ENCODE measurements at regions of chr10 and their contacts with region 1.

Region 1: DNA sequence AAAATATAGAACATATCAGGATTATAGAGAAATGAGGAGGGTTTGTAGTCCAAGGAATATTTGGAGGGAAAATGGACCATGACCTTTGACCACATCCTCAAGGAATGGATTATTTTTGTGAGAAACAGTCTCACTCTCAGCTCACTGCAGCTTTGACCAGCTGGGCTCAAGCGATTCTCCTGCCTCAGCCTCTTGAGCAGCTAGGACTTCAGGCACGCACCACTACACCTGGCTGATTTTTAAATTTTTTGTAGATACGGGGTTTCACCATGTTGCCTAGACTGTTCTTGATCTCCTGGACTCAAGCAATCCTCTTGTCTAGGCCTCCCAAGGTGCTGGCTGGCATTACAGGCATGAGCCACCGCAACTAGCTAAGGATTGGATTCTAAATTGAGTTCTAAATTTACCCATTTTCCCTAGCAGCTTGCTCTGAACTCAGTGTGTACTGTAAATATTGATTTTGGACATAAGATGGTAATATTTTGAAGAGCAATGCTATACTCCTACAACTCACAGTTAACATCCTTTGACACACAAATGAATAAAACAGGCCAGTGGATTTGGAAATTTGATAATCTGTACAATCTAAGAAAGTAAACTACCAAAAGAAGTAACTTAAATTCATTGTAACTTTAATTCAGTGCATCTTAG is 73.8 kb downstream of the TET1 start:
- DNase-seq: no peak
- ATAC-seq: peak; percentile 79
- H3K4me3 ChIP-seq: no peak overlapping the region
- H3K27ac ChIP-seq: no peak overlapping the region
- H3K4me1 ChIP-seq: no peaks in the 10 kb centered on the region
- H3K27me3 ChIP-seq: no peaks in the 10 kb centered on the region
- CTCF ChIP-seq: no peak

Region 2: DNA sequence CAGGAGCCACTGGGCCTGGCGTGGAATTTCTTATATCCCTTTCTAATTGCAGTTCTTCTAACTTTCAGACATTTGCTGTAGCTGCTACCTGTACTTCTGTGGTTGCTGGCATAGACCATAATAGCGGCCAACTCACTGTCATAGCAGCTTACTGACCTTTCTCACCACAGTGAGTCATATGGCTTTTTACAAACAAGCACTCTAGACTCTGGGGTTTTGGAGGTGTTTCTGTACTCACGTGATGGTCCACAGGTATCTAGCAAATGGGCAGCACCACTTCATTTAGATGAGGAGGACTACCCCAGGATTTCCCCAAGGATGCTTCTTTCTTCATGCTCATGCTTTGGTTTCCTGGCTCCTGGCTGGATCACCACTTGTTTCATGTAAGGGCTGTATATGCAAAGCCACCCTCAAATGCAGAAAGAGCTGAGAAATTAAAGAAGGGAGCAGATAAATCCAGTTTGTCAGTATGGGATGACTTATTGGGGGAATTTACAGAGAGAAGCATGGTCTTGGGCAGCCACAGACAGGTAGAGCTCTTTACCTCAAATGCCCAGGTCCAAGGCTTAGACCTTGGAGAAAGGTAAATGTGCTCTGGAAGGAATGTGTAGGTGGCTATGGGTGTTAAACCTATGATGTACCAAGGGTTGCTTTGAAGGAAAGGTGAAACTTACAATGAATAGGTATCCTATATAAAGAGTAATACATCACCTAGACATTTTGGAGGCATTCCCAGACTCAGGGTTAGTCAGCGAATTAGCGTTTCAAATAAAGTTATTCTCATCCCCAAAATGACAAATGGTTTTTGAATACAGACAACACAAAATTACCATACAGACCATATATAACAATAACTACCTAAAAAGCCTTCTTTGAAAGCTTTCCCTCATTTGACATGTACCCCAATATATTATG is 90.7 kb before region 1 on chr10:
- CTCF ChIA-PET with region 1: no interaction called
- POLR2A ChIA-PET with region 1: interaction called, 16 read pairs
- intact Hi-C with region 1: no loop called
- DNase-seq: peak; percentile 95
- ATAC-seq: peak; percentile 95
- H3K4me3 ChIP-seq: peak overlapping the region; percentile 26; the same call in 1 of the 2 replicates
- H3K27ac ChIP-seq: peak overlapping the region; percentile 85
- H3K4me1 ChIP-seq: peaks cover 26% of the 10 kb centered on the region
- H3K27me3 ChIP-seq: no peaks in the 10 kb centered on the region
- CTCF ChIP-seq: no peak

Region 3: GRCh38 chr10:68647672-68648341 is 13.9 kb after region 1 on chr10:
- CTCF ChIA-PET with region 1: no interaction called
- POLR2A ChIA-PET with region 1: no interaction called
- intact Hi-C with region 1: loop called (anchors 1 kb)
- DNase-seq: peak; percentile 90
- ATAC-seq: peak; percentile 97
- H3K4me3 ChIP-seq: no peak overlapping the region
- H3K27ac ChIP-seq: peak overlapping the region; percentile 57
- H3K4me1 ChIP-seq: peaks cover 19% of the 10 kb centered on the region
- H3K27me3 ChIP-seq: no peaks in the 10 kb centered on the region
- CTCF ChIP-seq: no peak

Measured in PC-3 (cell line).